ENCODE measurements at regions of chr11 and their contacts with region 1.

Region 1: DNA sequence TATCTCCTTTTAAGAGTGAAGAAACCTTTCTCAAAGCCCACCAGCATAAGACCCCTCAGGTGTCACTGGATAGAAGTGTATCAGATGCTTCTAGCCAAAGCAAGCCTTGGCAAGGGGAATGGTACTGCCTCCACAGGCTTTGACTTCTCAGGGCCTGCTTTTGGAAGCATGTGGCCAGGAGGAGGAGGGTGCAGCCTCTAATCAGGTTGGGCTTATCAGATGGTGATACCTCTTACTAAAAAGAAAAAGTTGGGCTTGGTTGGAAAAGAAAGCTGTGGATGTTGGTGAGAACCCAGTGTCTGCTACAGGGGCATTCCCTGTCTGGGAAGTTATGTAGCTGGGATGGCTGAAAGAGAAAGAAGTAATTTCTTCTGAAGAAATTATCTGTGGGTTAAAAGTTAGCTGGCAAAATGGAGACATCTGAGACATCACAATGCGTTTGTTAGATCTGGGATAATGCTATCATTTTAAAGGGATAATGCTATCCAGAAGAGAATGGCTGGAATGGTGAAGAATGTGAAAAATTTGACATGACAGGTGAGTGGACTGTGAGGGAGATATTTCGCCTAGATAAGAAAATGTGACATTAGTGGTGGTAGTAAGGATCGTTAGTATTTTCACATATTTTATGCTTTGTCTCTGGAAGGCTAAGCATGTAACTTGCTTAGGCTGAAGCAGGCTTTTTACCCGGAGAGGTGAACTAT is 7.2 kb downstream of the APLP2 start:
- DNase-seq: peak; percentile 67 to 75
- H3K4me3 ChIP-seq: no peak overlapping the region
- H3K4me3 Mint-ChIP-seq: peak overlapping the region; percentile 48
- H3K27ac Mint-ChIP-seq: peak overlapping the region; percentile 84
- H3K4me1 ChIP-seq: peaks cover 80% of the 10 kb centered on the region
- H3K4me1 Mint-ChIP-seq: peaks cover 41% of the 10 kb centered on the region
- H3K27me3 ChIP-seq: no peaks in the 10 kb centered on the region
- H3K27me3 Mint-ChIP-seq: no peaks in the 10 kb centered on the region
- CTCF ChIP-seq: no peak

Region 2: DNA sequence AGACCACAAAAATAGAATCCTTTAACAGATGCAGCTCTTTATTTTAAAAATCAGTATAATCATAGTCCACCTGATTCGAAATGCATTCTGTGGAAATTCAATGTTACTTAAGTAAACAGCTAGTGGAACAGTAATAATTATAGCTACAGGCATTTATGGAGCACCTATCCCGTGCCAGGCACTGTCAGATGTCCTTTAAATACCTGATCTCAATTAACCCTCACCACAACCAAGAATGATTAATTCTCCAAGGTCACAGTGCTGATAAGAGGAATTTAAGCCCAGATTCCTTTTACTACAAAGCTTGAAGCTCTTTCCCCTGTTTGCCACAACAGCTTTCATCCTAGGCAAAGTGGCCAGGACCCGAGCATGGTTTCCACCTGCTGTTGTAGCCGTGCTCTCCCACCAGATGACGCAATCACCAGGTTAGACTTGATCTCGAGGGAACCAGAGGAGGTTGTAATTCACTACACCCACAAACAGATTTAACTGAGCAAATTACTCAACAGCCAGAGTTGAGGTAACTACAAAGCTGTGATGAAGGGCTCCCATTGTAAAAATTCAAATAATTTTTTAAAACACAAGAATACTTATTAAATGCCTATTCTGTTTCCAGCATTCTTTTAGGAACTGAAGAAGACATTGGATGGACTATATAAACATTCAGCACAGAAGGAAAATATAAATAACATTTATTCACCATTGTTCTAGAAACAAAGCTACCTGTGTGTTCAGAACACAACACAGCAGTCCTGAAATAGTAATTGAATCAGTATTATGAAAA is 84.6 kb before region 1 on chr11:
- CTCF ChIA-PET with region 1: interaction called, 5 read pairs
- POLR2A ChIA-PET with region 1: interaction called, 10 read pairs
- intact Hi-C with region 1: no loop called
- DNase-seq: peak; percentile 80 to 82
- H3K4me3 ChIP-seq: no peak overlapping the region
- H3K4me3 Mint-ChIP-seq: no peak overlapping the region
- H3K27ac Mint-ChIP-seq: peak overlapping the region; percentile 35
- H3K4me1 ChIP-seq: peaks cover 13% of the 10 kb centered on the region
- H3K4me1 Mint-ChIP-seq: peaks cover 28% of the 10 kb centered on the region
- H3K27me3 ChIP-seq: no peaks in the 10 kb centered on the region
- H3K27me3 Mint-ChIP-seq: no peaks in the 10 kb centered on the region
- CTCF ChIP-seq: peak in 1 of 2 experiments; percentile 84

Region 3: DNA sequence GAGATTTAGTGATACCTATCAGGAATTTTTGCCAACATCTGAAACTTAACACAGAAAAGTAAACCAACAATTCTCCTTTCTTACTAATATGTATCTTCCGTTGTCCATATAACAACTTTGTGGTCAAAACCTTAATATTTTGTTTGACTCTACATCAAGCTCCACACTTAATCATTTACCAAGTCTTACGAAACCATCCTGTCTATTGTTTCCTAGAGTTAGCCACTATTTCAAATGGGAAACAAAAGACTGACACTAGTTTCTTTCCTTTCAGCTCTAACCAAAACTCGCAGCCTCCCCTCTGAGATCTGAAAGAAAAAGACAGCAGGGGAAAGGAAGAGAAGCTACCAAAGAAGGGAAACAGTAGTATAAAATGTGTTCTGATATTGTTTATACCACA is 47.8 kb before region 1 on chr11:
- CTCF ChIA-PET with region 1: no interaction called
- POLR2A ChIA-PET with region 1: no interaction called
- intact Hi-C with region 1: loop called (anchors 2 kb)
- DNase-seq: no peak
- H3K4me3 ChIP-seq: no peak overlapping the region
- H3K4me3 Mint-ChIP-seq: peak overlapping the region; percentile 10
- H3K27ac Mint-ChIP-seq: peak overlapping the region; percentile 53
- H3K4me1 ChIP-seq: peaks cover 66% of the 10 kb centered on the region
- H3K4me1 Mint-ChIP-seq: peaks cover 47% of the 10 kb centered on the region
- H3K27me3 ChIP-seq: no peaks in the 10 kb centered on the region
- H3K27me3 Mint-ChIP-seq: no peaks in the 10 kb centered on the region
- CTCF ChIP-seq: no peak

Region 4: DNA sequence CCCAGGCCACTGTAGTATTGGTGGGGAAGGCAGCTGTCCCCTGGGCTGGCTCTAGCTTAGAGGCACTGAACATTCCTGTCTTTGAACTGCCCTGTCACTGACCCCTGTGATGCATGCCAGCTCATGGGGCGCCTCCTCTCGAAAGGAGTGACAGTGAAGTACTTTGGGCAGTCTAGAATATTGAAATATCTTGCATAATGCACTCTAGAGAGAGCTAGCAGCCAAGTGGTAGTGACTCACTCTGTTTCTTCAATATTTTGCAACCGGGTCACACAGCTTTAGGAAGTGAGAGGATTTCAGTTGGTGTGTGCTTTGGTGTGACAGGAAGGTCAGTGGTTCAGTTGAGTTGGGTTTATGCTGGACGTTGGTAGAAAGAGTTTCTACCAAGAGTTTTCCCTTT is 47.2 kb after region 1 on chr11:
- CTCF ChIA-PET with region 1: no interaction called
- POLR2A ChIA-PET with region 1: interaction called, 4 read pairs
- intact Hi-C with region 1: loop called (anchors 2 kb)
- DNase-seq: peak; percentile 66 to 67
- H3K4me3 ChIP-seq: no peak overlapping the region
- H3K4me3 Mint-ChIP-seq: no peak overlapping the region
- H3K27ac Mint-ChIP-seq: peak overlapping the region; percentile 82
- H3K4me1 ChIP-seq: peaks cover 60% of the 10 kb centered on the region
- H3K4me1 Mint-ChIP-seq: peaks cover 58% of the 10 kb centered on the region
- H3K27me3 ChIP-seq: no peaks in the 10 kb centered on the region
- H3K27me3 Mint-ChIP-seq: no peaks in the 10 kb centered on the region
- CTCF ChIP-seq: no peak

Region 5: DNA sequence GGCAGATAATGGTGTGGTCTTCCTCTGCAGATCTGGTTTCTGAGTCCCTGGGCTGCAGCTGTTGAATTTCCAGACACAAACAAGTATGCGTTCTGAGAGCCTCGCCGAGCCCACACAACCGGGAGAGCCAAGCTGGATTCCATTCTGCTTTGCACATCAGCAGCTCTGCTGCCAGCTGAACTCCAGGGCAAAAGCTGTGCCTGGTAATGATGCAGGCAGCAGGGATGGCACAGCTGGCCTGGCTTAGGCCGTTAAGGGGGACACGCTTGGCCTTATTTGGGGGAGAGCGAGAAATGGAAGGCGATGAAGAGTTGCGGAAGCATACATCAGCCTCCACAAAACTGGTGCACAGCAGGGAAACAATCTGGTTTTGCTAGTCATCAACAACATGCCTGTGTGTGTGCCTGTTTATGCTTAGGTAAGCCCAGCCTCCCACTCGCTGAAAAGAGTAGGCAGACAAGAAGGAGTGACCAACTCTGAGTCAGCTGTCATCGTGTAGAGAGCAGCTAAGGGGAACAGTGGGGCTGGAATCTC is 326.4 kb after region 1 on chr11:
- CTCF ChIA-PET with region 1: no interaction called
- POLR2A ChIA-PET with region 1: no interaction called
- intact Hi-C with region 1: no loop called
- DNase-seq: no peak
- H3K4me3 ChIP-seq: no peak overlapping the region
- H3K4me3 Mint-ChIP-seq: no peak overlapping the region
- H3K27ac Mint-ChIP-seq: no peak overlapping the region
- H3K4me1 ChIP-seq: no peaks in the 10 kb centered on the region
- H3K4me1 Mint-ChIP-seq: no peaks in the 10 kb centered on the region
- H3K27me3 ChIP-seq: no peaks in the 10 kb centered on the region
- H3K27me3 Mint-ChIP-seq: peaks cover 14% of the 10 kb centered on the region
- CTCF ChIP-seq: no peak